ENCODE measurements at regions of chr10 and their contacts with region 1.

Region 1: DNA sequence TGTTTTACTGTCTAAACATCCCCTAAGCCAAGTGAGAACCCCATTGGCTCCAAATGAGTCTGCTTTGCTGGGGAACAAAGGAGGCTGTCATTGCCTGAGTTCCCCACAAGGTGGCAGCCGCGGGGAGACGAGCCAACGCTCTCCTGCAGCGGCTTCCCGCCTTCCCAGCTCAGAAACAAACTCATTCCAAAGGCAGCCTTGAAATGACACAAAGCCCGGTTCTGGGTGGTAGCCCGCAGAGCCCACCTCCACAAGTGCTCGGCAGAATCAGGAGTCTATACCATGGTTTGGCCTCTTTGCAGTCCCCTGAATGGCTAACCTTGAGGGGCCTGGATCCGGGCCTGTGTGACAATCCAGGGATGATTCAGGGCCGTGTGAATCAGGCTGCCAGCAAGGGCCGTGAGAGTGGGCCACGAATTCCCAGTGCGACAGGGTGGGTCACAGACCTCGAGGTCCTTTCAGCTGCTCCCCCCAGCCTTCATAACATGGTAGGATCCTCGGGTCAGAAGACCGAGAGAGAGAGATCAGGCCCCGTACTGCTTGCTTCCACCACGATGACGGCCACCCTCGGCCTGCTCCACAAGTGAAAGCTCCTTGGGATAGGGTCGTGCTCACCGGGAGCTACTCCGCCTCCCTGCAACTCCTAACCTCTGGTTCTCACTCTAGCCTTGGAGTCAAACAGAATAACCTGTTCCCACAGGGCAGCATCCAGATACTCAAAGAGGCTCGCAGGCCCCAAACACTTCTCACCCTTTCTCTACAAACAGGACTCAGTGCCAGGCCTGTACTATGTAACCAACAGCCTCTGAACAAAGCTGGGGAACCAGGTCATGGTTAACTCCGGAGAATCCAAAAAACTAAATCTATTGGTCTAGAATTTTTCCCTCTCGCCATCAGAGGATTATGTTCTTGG is 79.6 kb downstream of the DLG5 start:
- ATAC-seq: peak; percentile 75 to 91 (median 83)
- H3K4me3 ChIP-seq: no peak overlapping the region
- H3K27ac ChIP-seq: no peak overlapping the region
- H3K4me1 ChIP-seq: peaks cover 10 to 15% of the 10 kb centered on the region in 2 donors

Region 2: GRCh38 chr10:77513781-77514331 is 333.1 kb before region 1 on chr10:
- in situ Hi-C with region 1: no loop called
- ATAC-seq: peak; percentile 96 to 100 (median 98)
- H3K4me3 ChIP-seq: no peak overlapping the region
- H3K27ac ChIP-seq: peak overlapping the region in 1 of 2 donors; percentile 10
- H3K4me1 ChIP-seq: peaks cover 37 to 44% of the 10 kb centered on the region in 2 donors

Region 3: GRCh38 chr10:77974396-77975074 is 127.6 kb after region 1 on chr10:
- in situ Hi-C with region 1: loop called in 1 of 9 experiments (anchors 25 kb)
- ATAC-seq: peak in 3 of 8 experiments; percentile 6 to 16 (median 10)
- H3K4me3 ChIP-seq: no peak overlapping the region
- H3K27ac ChIP-seq: no peak overlapping the region
- H3K4me1 ChIP-seq: no peaks in the 10 kb centered on the region

Region 4: DNA sequence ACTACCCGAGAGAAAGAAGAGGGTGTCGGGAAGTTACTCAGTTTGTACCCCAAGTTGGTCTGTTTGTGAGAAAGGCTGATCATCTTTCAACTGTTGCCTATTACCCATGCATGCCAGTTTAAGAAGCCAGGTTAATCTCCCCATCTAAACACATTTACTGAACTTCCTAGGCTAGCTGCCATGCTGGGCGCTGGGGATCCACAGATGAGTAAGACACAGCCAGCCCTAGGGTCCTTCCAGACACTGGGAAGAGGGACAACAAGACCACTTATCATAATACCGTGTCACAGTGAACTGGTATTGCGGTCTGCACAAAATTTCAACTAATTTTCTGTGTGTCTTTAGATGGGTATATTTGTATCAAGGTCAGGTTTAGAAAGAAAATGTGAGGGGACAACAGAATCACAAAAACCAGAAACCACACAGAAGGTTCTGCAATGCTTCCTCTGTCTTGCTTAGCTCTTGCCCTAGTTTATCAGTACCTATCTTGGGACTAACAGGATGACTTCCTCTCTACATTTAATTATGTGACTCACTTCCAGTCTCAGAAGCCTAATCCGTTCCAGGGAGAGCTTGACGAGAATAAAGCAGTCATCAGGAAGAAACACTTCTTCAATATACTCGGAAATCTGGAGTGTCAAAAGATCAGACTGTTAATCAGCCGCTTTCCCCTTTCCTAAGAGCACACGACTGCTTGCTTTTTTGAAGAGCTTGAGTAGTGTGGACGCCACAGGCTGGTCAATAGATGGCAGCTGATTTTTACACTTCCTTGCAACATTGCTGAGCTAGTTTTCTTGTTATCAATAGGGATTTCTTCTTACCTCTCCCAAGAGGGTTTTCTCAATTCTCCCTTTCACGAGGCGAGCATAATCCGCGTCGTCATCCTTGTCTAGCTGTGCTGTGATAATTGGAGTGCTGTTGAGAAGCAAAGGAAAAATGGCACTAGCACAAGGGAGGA is 136.7 kb after region 1 on chr10:
- in situ Hi-C with region 1: loop called in 2 of 9 experiments (anchors 10 to 25 kb)
- ATAC-seq: peak in 3 of 8 experiments; percentile 40 to 66 (median 46)
- H3K4me3 ChIP-seq: no peak overlapping the region
- H3K27ac ChIP-seq: no peak overlapping the region
- H3K4me1 ChIP-seq: peaks cover 0 to 7% of the 10 kb centered on the region in 2 donors

Region 5: DNA sequence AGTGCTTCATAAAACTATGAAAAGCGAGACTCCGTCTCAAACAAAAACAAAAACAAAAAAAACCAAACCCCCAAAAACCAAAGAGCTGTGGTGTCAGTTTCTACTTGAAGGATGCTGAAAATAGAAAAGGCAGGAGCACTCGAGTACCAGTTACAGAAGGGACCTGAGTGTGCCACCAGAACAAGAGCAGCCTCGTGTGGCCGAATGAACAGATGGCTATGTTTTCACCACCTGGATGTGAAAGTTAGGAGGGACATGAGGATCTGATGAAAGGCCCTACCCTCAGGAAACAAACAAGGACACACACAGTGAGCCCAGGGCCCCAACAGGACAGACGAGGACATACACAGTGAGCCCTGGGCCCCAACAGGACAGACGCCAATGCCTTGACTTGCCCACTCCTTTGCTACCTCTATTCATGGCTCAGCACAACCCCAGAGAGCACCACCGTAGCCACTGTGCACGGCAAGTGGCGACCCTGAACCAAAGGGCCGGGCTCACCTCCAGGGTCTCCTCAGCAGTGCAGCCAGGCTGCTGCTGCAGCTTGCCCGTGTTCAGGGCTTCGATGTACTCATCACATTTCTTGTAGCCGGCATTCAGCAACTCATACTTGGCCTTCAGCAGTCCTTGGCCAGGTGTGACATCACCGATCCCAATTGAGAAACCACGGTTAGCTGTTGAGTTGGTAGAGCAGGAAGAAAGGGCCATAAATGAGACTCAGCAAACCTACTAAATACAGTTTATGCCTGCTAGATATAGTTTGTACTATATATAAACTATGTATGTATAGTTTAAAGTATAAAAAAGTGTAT is 157.4 kb after region 1 on chr10:
- in situ Hi-C with region 1: loop called in 3 of 9 experiments (anchors 25 kb)
- ATAC-seq: peak in 1 of 8 experiments; percentile 18
- H3K4me3 ChIP-seq: no peak overlapping the region
- H3K27ac ChIP-seq: no peak overlapping the region
- H3K4me1 ChIP-seq: no peaks in the 10 kb centered on the region

Measured in motor neuron (in vitro differentiated cells).